Common myeloid progenitor, CD34-positive (primary cell): ENCODE measurements at regions of chr16 and their contacts with region 1.

Region 1: DNA sequence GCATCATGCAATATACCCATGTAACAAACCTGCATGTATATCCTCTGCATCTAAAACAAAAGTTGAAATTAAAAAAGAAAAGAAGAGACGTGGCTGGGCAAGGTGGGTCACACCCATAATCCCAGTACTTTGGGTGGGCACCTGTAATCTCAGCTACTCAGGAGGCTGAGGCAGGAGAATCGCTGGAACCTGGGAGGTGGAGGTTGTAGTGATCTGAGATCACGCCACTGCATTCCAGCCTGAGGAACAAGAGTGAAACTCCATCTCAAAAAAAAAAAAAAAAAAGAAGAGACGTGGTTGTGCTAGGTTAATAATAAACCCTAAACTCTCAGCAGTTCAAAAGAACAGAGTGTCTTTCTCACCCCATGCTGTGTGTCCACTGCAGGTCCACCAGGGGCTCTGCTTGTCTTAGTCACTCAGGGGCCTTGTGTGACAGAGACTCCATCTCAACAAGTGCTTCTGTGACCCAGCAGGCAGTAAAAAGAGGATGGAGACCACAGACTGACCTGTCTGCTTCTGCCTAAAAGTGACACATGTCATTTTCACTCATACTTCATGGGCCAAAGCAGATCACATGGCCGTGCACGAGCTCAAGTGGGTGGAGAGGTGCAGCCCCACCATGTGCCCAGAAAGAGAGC is 22.3 kb upstream of the N4BP1 start:
- DNase-seq: no peak
- H3K4me3 ChIP-seq: no peak overlapping the region
- H3K27ac ChIP-seq: no peak overlapping the region
- H3K4me1 ChIP-seq: peaks cover 0 to 6% (median 1%) of the 10 kb centered on the region in 4 experiments
- H3K27me3 ChIP-seq: no peaks in the 10 kb centered on the region

Region 2: GRCh38 chr16:48353565-48354163 is 278.6 kb before region 1 on chr16:
- CTCF ChIA-PET with region 1: interaction called, 43 read pairs
- POLR2A ChIA-PET with region 1: no interaction called
- DNase-seq: peak; percentile 92 to 96 (median 96)
- H3K4me3 ChIP-seq: no peak overlapping the region
- H3K27ac ChIP-seq: no peak overlapping the region
- H3K4me1 ChIP-seq: peaks cover 0 to 14% (median 7%) of the 10 kb centered on the region in 4 experiments
- H3K27me3 ChIP-seq: no peaks in the 10 kb centered on the region

Region 3: DNA sequence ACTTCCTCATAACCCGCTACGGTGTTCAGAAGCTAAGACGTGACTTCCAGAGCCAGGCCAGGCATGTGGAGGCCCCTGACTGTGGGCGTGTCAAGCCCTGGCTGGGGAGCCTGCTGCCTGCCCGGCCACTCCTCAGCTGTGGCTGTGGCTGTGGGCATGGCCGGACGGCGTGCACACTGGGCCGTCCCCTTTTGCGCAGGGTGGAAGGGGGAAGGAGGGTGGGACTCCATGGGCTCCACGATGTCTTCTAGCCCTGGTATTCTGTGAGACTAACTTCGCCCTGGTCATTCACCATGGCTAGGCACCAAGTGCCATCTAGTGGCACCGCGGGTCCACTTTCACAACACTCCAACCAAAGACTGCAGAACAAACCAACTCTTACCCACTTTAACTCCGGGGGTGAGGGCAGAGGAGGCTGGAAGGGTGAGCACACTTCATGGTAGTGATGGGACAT is 90.2 kb before region 1 on chr16:
- CTCF ChIA-PET with region 1: interaction called, 42 read pairs
- POLR2A ChIA-PET with region 1: no interaction called
- DNase-seq: peak; percentile 75 to 88 (median 88)
- H3K4me3 ChIP-seq: peak overlapping the region in 1 of 7 experiments; percentile 59
- H3K27ac ChIP-seq: no peak overlapping the region
- H3K4me1 ChIP-seq: peaks cover 1 to 17% (median 10%) of the 10 kb centered on the region in 4 experiments
- H3K27me3 ChIP-seq: no peaks in the 10 kb centered on the region

Region 4: DNA sequence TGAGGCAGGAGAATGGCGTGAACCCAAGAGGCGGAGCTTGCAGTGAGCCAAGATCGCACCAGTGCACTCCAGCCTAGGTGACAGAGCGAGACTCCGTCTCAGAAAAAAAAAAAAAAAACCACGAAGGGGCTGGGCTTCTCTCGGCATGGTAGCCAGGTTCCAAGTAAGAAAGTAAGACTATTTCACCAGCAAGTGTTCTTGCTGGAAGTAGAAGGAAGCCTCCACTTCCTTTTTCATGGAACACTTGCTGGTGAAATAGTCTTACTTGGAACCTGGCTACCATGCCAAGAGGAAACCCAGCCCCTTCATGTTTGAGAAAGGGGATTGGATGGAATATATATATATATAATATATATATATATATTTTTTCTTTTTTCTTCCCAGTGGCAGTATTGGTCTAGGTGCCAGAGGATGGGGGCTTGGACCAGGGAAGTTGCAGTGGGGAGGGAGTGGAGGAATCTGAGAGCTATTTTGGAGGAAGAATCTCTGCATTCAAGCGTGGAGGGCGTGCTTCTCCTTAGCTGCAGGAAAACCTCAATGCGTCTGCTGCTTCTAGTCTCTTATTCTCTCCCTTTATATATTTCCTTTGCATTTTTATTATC is 15.1 kb before region 1 on chr16:
- CTCF ChIA-PET with region 1: interaction called, 11 read pairs
- POLR2A ChIA-PET with region 1: no interaction called
- DNase-seq: no peak
- H3K4me3 ChIP-seq: no peak overlapping the region
- H3K27ac ChIP-seq: no peak overlapping the region
- H3K4me1 ChIP-seq: peaks cover 23 to 56% (median 51%) of the 10 kb centered on the region in 4 experiments
- H3K27me3 ChIP-seq: no peaks in the 10 kb centered on the region